RWPE1 (cell line): ENCODE measurements at regions of chr19 and their contacts with region 1.

Region 1: GRCh38 chr19:35689666-35690225 is 14.6 kb upstream of the ZBTB32 start:
- DNase-seq: no peak
- H3K27ac ChIP-seq: no peak overlapping the region
- CTCF ChIP-seq: no peak

Region 2: GRCh38 chr19:35414442-35414841 is 275.3 kb before region 1 on chr19:
- CTCF ChIA-PET with region 1: no interaction called
- POLR2A ChIA-PET with region 1: interaction called, 10 read pairs
- DNase-seq: no peak
- H3K27ac ChIP-seq: no peak overlapping the region
- CTCF ChIP-seq: no peak

Region 3: DNA sequence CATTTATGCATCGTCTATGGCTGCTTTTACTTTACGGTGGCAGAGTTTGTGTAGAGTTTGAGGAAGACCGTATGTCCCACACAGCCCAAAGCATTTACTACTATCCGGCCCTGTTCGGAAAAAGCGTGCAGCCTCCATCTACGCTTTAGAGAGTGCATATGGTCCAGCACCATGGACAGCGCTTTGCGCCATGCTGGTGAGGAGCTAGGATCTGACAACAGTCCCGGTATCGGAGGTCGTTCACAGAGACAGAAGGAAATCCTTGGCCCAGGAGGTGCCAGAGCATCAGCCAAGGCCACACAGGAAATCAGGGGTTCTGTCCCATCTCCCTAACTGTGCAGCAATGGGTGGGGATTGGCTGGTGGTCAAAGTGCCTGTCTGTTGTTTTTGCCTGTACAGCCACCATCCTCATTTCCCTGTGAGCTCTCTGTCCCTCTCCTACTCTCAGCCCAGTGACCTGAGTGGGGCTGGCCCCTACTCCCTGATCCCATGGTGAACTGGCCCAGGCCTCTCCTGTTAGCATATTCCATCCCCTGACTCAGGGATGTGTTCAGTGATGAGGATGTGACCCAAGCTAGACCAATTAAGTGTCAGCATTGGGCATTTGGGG is 139.1 kb after region 1 on chr19:
- CTCF ChIA-PET with region 1: no interaction called
- POLR2A ChIA-PET with region 1: no interaction called
- DNase-seq: peak; percentile 50
- H3K27ac ChIP-seq: no peak overlapping the region
- CTCF ChIP-seq: no peak